ENCODE measurements at regions of chr1 and their contacts with region 1.

Region 1: DNA sequence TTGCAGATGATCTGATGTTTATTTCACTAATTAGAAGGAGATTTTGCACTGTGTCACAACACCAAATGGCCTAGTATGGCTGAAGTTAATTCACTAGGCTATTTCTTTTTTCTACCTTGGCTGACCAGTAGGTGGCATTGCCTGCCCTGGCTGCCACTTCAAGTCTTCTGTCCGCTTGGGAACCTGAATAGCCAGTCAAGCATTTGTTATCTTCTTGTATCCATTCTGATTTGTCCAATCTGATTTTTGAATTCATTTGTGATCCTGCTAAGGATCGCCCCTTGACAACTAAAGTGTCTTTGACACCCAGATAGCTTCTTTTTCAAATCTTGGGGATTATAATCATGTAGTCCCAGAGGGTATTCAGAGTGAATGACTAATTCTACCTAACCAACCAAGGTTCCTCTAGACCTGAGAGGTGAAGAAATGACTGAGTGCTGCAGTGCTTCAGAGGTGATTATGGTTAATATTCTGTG is 99.4 kb downstream of the GIPC2 start:
- DNase-seq: no peak
- ATAC-seq: peak; percentile 67
- H3K4me3 Mint-ChIP-seq: no peak overlapping the region
- H3K27ac Mint-ChIP-seq: no peak overlapping the region
- H3K4me1 Mint-ChIP-seq: peaks cover 28% of the 10 kb centered on the region
- H3K27me3 Mint-ChIP-seq: peaks cover 9% of the 10 kb centered on the region
- CTCF ChIP-seq: peak; percentile 86

Region 2: GRCh38 chr1:78132174-78132947 is 12.8 kb before region 1 on chr1:
- CTCF ChIA-PET with region 1: interaction called, 54 read pairs
- POLR2A ChIA-PET with region 1: no interaction called
- intact Hi-C with region 1: no loop called
- DNase-seq: no peak
- ATAC-seq: no peak
- H3K4me3 Mint-ChIP-seq: no peak overlapping the region
- H3K27ac Mint-ChIP-seq: no peak overlapping the region
- H3K4me1 Mint-ChIP-seq: no peaks in the 10 kb centered on the region
- H3K27me3 Mint-ChIP-seq: peaks cover 4% of the 10 kb centered on the region
- CTCF ChIP-seq: no peak

Region 3: DNA sequence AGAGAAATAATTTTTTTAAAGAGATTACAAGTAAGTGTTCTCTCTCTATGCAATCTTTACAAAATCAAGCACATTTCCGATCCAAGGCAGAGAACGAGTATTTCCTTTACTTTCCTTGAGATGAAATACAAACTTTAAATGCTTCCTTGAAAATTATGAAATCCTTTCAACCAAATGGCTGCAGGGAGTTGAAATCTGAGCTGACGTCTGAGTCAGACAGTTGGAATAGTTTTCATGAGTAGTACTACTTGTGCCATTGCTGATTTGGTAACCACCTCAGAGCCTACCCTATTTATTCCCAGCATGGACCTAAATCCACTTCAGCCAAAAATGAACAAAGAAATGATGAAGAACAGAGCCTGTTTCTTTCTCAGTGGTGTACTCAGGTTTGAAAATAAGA is 84.2 kb after region 1 on chr1:
- CTCF ChIA-PET with region 1: no interaction called
- POLR2A ChIA-PET with region 1: no interaction called
- intact Hi-C with region 1: no loop called
- DNase-seq: no peak
- ATAC-seq: no peak
- H3K4me3 Mint-ChIP-seq: no peak overlapping the region
- H3K27ac Mint-ChIP-seq: no peak overlapping the region
- H3K4me1 Mint-ChIP-seq: no peaks in the 10 kb centered on the region
- H3K27me3 Mint-ChIP-seq: peaks cover 7% of the 10 kb centered on the region
- CTCF ChIP-seq: no peak

Region 4: GRCh38 chr1:78676347-78676982 is 531.3 kb after region 1 on chr1:
- CTCF ChIA-PET with region 1: interaction called, 8 read pairs
- POLR2A ChIA-PET with region 1: no interaction called
- intact Hi-C with region 1: loop called (anchors 1 kb)
- DNase-seq: no peak
- ATAC-seq: no peak
- H3K4me3 Mint-ChIP-seq: no peak overlapping the region
- H3K27ac Mint-ChIP-seq: no peak overlapping the region
- H3K4me1 Mint-ChIP-seq: no peaks in the 10 kb centered on the region
- H3K27me3 Mint-ChIP-seq: no peaks in the 10 kb centered on the region
- CTCF ChIP-seq: peak; percentile 60

Measured in activated B cell treated with CpG ODN at 0.5 μM for 24 hours (primary cell).